Naive thymus-derived CD4-positive, alpha-beta T cell (primary cell): ENCODE measurements at regions of chr19 and their contacts with region 1.

Region 1: DNA sequence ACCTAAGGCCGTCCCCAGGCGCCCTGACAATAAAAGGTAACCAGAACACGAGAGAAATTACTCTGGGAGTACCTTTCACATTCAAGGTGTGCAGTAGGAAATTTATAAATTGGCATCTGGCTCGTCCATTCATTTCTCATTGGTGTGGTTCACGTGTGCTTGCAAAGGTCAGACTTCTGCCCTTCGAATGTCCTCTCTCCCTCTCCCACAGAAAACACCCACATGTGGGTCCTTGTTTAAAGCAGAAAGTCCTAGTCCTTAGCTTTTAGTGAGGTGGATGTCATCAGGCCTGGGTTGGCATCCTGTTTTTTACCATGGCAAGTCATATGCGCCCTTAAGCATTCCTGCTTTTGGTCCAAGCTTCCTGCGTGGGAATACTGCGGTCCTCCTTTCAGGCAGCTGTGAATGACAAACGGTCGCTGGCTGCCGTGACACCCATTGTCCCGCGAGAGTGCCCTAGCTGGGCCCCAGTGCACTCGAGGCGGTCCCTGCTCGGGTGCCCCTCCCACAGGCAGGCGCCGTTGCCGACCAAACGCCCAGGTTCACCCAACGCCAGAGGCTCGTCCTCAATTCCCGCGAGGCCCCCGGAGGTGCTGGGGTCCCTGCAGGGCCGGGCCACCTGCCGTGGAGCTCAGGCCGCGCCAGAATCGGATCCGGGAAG is at the start of gene NUDT19:
- DNase-seq: peak; percentile 50 to 82 (median 62)
- ATAC-seq: peak; percentile 87
- H3K4me3 ChIP-seq: peak within 1 kb of the TSS; percentile 50
- H3K4me3 Mint-ChIP-seq: peak within 1 kb of the TSS; percentile 83 to 97 (median 92)
- H3K27ac ChIP-seq: peak within 1 kb of the TSS; percentile 68
- H3K27ac Mint-ChIP-seq: peak within 1 kb of the TSS; percentile 37 to 93 (median 85)
- H3K4me1 ChIP-seq: peaks cover 20 to 24% of the 10 kb centered on the region in 2 donors
- H3K4me1 Mint-ChIP-seq: peaks cover 35 to 52% (median 47%) of the 10 kb centered on the region in 7 donors
- H3K27me3 ChIP-seq: no peaks in the 10 kb centered on the region
- H3K27me3 Mint-ChIP-seq: no peaks in the 10 kb centered on the region
- total RNA-seq, gene NUDT19: 8.4 to 17.0 (median 9.0) TPM

Region 2: DNA sequence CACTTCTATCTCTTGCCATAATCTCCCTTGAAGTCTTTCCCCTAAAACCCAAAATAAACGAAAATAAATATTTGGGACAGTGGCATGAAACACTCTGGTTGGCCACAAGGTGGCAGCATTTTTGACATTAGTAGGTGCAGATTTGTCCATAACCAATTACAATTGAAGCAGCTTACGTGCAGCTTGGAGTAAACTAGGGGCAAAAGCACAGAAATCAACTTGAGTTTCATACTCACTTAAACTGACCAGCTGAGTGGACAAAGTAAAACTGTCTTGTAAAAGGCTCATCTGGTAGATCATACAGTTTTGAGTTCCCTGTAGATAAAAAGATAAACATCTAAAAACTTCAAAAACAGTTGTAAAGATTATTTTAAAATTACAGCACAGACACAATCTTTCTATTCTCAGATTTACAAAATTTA is 91.7 kb before region 1 on chr19:
- CTCF ChIA-PET with region 1: interaction called, 3 read pairs
- POLR2A ChIA-PET with region 1: no interaction called
- intact Hi-C with region 1: loop called in 1 of 2 experiments (anchors 1 kb)
- DNase-seq: peak in 7 of 9 donors; percentile 22 to 63 (median 58)
- ATAC-seq: peak; percentile 72
- H3K4me3 ChIP-seq: no peak overlapping the region
- H3K4me3 Mint-ChIP-seq: no peak overlapping the region
- H3K27ac ChIP-seq: no peak overlapping the region
- H3K27ac Mint-ChIP-seq: peak overlapping the region in 2 of 9 donors; percentile 3 to 66
- H3K4me1 ChIP-seq: no peaks in the 10 kb centered on the region
- H3K4me1 Mint-ChIP-seq: peaks cover 5 to 8% (median 7%) of the 10 kb centered on the region in 7 donors
- H3K27me3 ChIP-seq: no peaks in the 10 kb centered on the region
- H3K27me3 Mint-ChIP-seq: no peaks in the 10 kb centered on the region

Region 3: DNA sequence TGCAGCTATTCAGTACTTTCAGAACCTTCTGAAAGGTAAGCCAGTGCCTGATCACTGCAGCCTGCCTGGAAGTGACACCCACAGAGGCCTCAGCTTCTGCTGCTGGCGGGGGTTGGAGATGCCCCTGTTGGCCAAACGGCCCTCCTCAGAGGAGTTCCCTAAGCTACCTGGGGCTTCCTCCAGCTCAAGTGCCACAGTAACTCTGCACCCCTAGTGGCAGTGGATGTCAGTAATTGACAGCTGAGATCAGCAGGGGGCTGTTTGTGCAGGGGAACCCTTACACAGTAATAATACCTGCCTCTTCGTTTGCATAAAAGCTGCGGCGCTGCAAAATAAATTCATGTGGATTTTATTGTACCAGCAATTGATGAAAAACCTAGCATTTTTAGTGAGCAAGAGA is 57.1 kb after region 1 on chr19:
- CTCF ChIA-PET with region 1: no interaction called
- POLR2A ChIA-PET with region 1: no interaction called
- intact Hi-C with region 1: loop called in 1 of 2 experiments (anchors 5 kb)
- DNase-seq: peak in 6 of 9 donors; percentile 19 to 41 (median 30)
- ATAC-seq: no peak
- H3K4me3 ChIP-seq: no peak overlapping the region
- H3K4me3 Mint-ChIP-seq: peak overlapping the region in 1 of 10 donors; percentile 23
- H3K27ac ChIP-seq: no peak overlapping the region
- H3K27ac Mint-ChIP-seq: no peak overlapping the region
- H3K4me1 ChIP-seq: peaks cover 5 to 35% of the 10 kb centered on the region in 2 donors
- H3K4me1 Mint-ChIP-seq: peaks cover 0 to 19% (median 7%) of the 10 kb centered on the region in 7 donors
- H3K27me3 ChIP-seq: peaks cover 0 to 3% of the 10 kb centered on the region in 2 donors
- H3K27me3 Mint-ChIP-seq: peaks cover 7 to 22% (median 16%) of the 10 kb centered on the region in 5 donors

Region 4: DNA sequence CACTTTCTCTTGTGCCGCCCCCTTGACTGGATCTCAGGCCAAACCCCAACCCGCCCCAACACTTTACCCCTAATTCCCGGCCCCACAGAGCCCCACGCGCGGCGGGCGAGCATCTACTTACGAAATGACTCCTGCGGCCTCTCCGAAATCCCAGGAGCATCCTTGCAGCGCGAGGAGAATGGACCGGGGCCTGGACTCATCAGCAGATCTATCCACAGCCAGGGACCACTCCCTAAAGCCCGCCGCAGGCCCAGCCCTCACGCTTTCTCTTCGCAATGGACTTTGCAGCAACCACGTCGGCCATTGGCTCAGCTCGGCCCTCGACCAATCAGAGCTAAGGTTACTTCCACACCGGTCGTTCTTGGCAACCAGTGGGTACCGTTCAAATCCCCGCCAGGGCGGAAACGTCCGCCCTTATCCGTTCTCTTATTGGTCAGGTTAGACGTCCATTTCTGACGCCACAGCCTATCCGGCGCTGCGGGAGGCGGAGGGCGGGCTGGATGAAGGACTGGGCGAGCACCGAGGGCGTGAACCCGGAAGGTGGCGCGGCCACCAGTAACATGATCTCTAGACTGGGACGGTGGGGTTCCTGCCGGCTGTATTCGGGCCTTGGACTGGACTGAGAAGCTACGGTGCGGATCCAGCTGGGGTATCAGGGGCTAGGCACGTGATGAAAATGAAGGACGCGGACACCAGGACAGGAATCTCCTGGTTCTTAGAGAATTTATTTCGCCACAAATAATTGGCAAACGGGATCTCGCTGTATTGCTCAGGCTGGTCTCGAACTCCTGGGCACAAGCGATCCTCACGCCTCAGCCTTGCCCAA is 280.5 kb after region 1 on chr19 and contains the starts of genes CEP89 and FAAP24:
- CTCF ChIA-PET with region 1: no interaction called
- POLR2A ChIA-PET with region 1: interaction called, 6 read pairs
- intact Hi-C with region 1: loop called (anchors 1 kb)
- DNase-seq: peak; percentile 89 to 99 (median 98)
- ATAC-seq: peak; percentile 98
- H3K4me3 ChIP-seq: peak within 1 kb of the TSS; percentile 78
- H3K4me3 Mint-ChIP-seq: peak within 1 kb of the TSS; percentile 96 to 100 (median 99)
- H3K27ac ChIP-seq: peak within 1 kb of the TSS; percentile 75
- H3K27ac Mint-ChIP-seq: peak within 1 kb of the TSS; percentile 92 to 97 (median 97)
- H3K4me1 ChIP-seq: peaks cover 0 to 5% of the 10 kb centered on the region in 2 donors
- H3K4me1 Mint-ChIP-seq: peaks cover 14 to 27% (median 20%) of the 10 kb centered on the region in 7 donors
- H3K27me3 ChIP-seq: no peaks in the 10 kb centered on the region
- H3K27me3 Mint-ChIP-seq: no peaks in the 10 kb centered on the region
- total RNA-seq, gene CEP89: 7.4 to 22.4 (median 20.1) TPM
- total RNA-seq, gene FAAP24: 0.71 to 7.2 (median 2.5) TPM

Region 5: GRCh38 chr19:33118643-33119042 is 427.2 kb after region 1 on chr19:
- CTCF ChIA-PET with region 1: no interaction called
- POLR2A ChIA-PET with region 1: no interaction called
- intact Hi-C with region 1: loop called in 1 of 2 experiments (anchors 2 kb)
- DNase-seq: no peak
- ATAC-seq: no peak
- H3K4me3 ChIP-seq: no peak overlapping the region
- H3K4me3 Mint-ChIP-seq: no peak overlapping the region
- H3K27ac ChIP-seq: no peak overlapping the region
- H3K27ac Mint-ChIP-seq: peak overlapping the region in 1 of 9 donors; percentile 59
- H3K4me1 ChIP-seq: no peaks in the 10 kb centered on the region
- H3K4me1 Mint-ChIP-seq: no peaks in the 10 kb centered on the region
- H3K27me3 ChIP-seq: no peaks in the 10 kb centered on the region
- H3K27me3 Mint-ChIP-seq: no peaks in the 10 kb centered on the region